Spleen (tissue), 13 donors: ENCODE measurements at regions of chr17 and their contacts with region 1.

Region 1: DNA sequence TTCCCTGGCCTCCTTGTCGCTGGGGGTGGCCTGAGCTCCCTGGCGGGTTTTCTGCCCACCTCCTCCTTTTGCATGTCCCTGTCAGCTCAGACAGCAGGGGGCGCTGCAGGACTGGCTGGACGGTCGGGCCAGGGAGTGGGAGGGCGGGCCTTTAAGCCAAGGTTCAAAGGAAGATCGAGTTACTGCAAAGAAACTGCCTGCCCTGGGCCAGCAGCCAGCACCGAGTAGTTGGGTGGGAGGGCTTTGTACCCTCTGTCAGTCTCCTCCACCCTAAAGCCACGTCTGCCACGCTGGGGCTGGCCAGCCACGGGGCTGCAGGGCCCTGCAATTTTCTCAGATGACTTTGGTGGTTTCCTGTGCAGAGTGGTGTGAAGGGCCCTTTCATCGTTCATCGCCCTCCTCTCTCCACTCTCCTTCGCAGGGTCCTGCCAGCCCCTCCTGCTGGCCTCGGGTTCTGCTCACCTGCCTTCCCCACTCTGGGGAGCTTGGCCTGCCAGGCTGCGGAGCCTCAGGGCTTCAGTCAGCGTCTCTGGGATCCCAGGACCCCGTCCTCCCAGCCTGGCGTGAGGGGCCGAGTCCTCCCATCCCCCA is 12.3 kb downstream of the GPR142 start:
- DNase-seq: peak; percentile 97
- H3K4me3 ChIP-seq: peak overlapping the region in 1 of 8 donors; percentile 50
- H3K27ac ChIP-seq: peak overlapping the region in 4 of 8 donors; percentile 14 to 59 (median 42)
- H3K4me1 ChIP-seq: peaks cover 4 to 22% (median 14%) of the 10 kb centered on the region in 6 donors
- H3K27me3 ChIP-seq: peaks cover 0 to 18% (median 0%) of the 10 kb centered on the region in 7 donors
- CTCF ChIP-seq: peak; percentile 72 to 96 (median 93)
- POLR2A ChIP-seq: no peak

Region 2: DNA sequence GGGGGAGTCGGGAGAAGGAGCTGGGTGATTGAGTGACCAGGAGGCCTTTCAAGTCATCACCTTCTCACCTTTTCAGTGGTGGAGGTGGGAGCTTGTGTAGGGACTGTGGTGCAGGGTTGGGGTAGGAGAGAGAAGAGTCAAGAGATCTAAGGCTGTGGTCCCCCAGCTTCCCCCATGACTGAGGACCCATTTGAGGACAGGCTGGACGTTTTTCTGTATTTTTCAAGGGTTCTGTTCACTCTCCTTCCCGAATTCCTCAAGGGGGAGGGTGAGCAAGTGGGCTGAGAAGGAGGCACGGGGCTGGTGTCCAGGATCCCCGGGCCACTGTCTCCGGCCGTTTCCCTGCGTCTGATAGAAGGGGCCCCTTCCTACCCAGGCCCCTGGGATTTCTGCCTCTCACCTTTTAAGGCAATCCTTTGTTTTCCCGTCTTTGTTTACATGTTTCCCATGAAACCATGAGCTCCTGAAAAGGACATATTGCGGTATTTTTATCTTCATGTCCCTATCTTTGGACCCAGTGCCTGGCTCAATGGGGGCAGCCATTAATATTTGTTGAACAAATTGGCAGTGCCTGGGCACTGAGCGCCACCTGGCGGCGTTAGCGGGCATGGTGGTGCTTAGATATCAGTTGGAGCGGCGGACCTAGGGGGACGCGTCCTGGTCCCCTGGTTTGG is 77.7 kb after region 1 on chr17:
- intact Hi-C with region 1: loop called (anchors 2 kb)
- DNase-seq: peak; percentile 94
- H3K4me3 ChIP-seq: no peak overlapping the region
- H3K27ac ChIP-seq: peak overlapping the region in 1 of 8 donors; percentile 28
- H3K4me1 ChIP-seq: peaks cover 19 to 84% (median 55%) of the 10 kb centered on the region in 6 donors
- H3K27me3 ChIP-seq: peaks cover 0 to 24% (median 0%) of the 10 kb centered on the region in 7 donors
- CTCF ChIP-seq: peak; percentile 83 to 96 (median 93)
- POLR2A ChIP-seq: no peak

Region 3: GRCh38 chr17:74493381-74493833 is 113.8 kb after region 1 on chr17:
- intact Hi-C with region 1: loop called (anchors 10 kb)
- DNase-seq: peak; percentile 87
- H3K4me3 ChIP-seq: no peak overlapping the region
- H3K27ac ChIP-seq: peak overlapping the region in 1 of 8 donors; percentile 11
- H3K4me1 ChIP-seq: peaks cover 0 to 30% (median 4%) of the 10 kb centered on the region in 6 donors
- H3K27me3 ChIP-seq: peaks cover 0 to 5% (median 0%) of the 10 kb centered on the region in 7 donors
- CTCF ChIP-seq: peak; percentile 83 to 98 (median 93)
- POLR2A ChIP-seq: no peak